ENCODE measurements at regions of chr6 and their contacts with region 1.

Region 1: GRCh38 chr6:42901536-42901957 is 14.3 kb upstream of the PTCRA start:
- ATAC-seq: peak; percentile 80 to 97 (median 91)
- H3K4me3 ChIP-seq: no peak overlapping the region
- H3K27ac ChIP-seq: no peak overlapping the region
- H3K4me1 ChIP-seq: peaks cover 3 to 14% of the 10 kb centered on the region in 2 donors

Region 2: GRCh38 chr6:42482174-42482573 is 419.4 kb before region 1 on chr6:
- in situ Hi-C with region 1: no loop called
- ATAC-seq: peak in 5 of 8 experiments; percentile 42 to 55 (median 46)
- H3K4me3 ChIP-seq: no peak overlapping the region
- H3K27ac ChIP-seq: no peak overlapping the region
- H3K4me1 ChIP-seq: peaks cover 12 to 14% of the 10 kb centered on the region in 2 donors

Region 3: GRCh38 chr6:43013843-43014433 is 112.4 kb after region 1 on chr6 and contains the starts of genes KLHDC3 and MEA1:
- in situ Hi-C with region 1: loop called in 1 of 9 experiments (anchors 25 kb)
- ATAC-seq: peak; percentile 88 to 96 (median 94)
- H3K4me3 ChIP-seq: peak within 1 kb of the TSS; percentile 59 to 93 (median 70)
- H3K27ac ChIP-seq: peak within 1 kb of the TSS; percentile 72 to 74
- H3K4me1 ChIP-seq: peaks cover 6 to 11% of the 10 kb centered on the region in 2 donors
- total RNA-seq, gene KLHDC3: 63.1 to 135 (median 100) TPM
- total RNA-seq, gene MEA1: 47.7 to 111 (median 72.7) TPM

Region 4: DNA sequence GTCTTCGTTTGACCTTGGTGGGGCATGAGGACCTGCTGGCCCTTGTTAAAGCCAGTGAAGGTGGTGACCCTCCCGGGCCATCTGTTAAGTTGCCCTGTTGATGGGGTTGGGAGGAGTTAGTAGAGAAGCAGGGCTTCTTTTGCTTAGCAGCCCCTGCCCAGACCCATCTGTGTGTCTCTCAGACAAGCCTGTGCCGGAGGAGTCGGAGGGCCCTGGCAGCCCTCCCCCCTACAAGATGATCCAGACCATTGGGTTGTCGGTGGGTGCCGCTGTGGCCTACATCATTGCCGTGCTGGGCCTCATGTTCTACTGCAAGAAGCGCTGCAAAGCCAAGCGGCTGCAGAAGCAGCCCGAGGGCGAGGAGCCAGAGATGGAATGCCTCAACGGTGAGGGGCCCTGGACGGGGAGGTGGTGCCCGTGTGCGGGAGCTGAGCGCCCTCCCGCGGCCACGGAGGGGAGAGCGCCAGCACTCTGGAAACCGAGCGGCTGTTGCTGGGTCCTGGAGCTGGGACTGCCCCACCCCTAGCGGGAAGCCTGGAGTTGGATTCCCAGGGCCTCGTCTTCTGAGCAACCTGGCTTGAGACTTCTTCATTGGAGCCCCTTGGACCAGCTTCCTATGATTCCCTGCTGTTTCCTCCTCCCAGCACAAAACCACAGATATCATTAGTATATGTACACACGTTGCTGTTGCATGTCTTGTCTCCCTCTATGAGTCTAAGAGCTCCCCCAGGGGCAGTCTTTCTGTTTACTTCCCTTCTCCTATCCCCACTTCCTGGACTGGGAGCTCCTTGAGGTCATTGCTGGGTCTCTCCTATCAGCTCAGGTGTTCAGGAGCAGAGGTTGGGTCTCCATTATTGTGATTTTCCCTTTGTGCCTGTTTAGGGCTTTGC is 241.9 kb after region 1 on chr6:
- in situ Hi-C with region 1: loop called in 3 of 9 experiments (anchors 25 kb)
- ATAC-seq: peak; percentile 93 to 98 (median 96)
- H3K4me3 ChIP-seq: no peak overlapping the region
- H3K27ac ChIP-seq: peak overlapping the region; percentile 8 to 68
- H3K4me1 ChIP-seq: peaks cover 8 to 12% of the 10 kb centered on the region in 2 donors

Measured in motor neuron (in vitro differentiated cells).